Activated naive CD8-positive, alpha-beta T cell treated with anti-CD3 and anti-CD28 coated beads, Interleukin-2, amount 10 ng/mL, durations not matched to agents 7 days and 5 days (primary cell): ENCODE measurements at regions of chr3 and their contacts with region 1.

Region 1: DNA sequence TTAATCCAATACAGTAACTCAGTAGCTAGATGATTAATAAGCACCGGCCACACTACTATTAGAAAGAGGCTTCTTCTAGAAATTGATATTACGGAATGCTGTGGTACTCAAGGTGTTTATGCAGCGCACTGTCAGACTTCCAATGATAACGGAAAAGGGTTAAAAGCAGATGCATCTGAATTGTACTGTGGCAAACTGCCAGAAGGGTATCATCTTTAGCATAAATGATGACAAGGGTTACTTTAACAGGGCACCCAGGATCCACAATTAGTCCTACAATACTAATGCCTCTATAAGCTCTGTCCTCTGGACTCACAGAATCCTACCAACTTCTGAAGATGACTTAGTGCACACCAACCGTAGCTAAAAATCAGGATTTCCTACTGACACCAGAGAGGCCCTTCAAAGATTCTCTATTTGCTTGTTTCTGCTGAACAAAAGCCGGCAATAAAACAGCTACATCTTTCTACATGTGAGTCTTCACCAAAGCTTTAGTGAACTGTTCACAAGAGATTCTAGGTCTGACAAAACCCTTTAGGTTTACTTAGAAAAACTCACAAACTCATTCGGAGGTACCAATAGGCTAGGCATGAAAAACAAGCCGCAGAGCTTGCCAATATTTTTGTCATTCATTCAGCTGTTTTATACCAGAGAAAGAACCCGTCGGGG is 7.1 kb downstream of the SATB1 start:
- DNase-seq: no peak
- ATAC-seq: peak; percentile 14
- H3K4me3 Mint-ChIP-seq: peak overlapping the region; percentile 82
- H3K27ac Mint-ChIP-seq: peak overlapping the region; percentile 90
- H3K4me1 Mint-ChIP-seq: peaks cover 60% of the 10 kb centered on the region
- H3K27me3 Mint-ChIP-seq: no peaks in the 10 kb centered on the region

Region 2: DNA sequence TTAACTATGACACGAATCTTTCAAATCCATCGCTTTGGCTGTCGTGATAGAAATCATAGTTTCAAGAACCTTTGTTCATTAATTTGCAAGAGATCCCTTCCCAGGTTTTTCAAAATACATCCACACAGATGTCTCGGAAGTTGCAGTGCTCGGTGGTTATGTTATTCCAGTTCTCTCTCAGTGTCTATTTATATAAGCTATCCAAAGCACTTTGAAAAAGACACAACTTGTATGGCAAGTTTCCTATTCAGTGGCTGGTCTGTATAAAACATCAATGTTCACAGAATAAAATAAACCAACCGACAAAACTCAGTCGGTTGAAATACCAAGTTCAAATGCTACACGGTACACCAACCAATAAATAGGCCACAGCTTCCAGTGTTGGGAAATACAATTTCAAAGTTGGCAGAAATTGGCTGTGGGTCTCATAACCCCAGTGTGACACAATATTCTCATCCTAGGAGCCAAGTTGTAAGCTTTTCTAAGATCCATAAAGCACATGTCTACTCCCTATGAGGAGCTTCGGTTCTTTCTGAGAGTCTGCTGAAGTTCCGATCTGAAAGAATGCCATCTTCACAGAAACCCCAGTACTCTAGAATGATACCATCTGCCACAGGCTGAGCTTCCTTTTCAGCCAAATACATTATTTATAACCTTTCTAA is 16.6 kb before region 1 on chr3:
- POLR2A ChIA-PET with region 1: interaction called, 10 read pairs
- DNase-seq: no peak
- ATAC-seq: peak; percentile 28
- H3K4me3 Mint-ChIP-seq: peak overlapping the region; percentile 77
- H3K27ac Mint-ChIP-seq: peak overlapping the region; percentile 74
- H3K4me1 Mint-ChIP-seq: peaks cover 80% of the 10 kb centered on the region
- H3K27me3 Mint-ChIP-seq: no peaks in the 10 kb centered on the region